T-cell (primary cell): ENCODE measurements at regions of chr5 and their contacts with region 1.

Region 1: DNA sequence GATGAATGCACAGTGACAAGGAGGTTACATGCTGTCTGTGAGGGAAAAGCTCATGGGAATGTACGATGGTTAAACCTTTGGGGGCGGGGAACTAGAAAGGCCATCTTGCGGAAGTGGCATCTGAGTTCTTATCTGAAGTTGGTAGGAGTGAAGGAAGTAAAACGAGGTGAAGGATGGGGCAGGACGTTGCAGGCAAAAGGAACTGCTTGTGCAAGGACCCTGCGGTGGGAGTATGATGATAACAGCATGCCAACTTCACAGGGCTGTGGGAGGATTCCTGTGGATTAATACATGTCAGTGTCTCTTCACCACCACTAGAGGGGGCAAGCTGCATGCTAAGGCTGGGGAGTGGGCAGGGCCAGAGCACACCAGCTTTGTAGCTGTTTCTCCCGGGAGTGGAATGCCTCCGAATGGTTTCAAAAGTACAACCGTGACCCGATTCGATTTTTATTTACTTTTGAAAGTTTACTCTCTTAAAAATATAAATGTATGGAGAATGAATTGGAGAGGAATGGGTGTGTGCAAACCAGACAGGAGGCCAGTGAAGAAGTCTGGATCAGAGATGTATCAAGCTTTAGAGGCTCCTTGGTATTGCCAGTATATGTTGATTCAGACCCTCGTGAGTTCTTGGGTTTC is 62.5 kb downstream of the CYFIP2 start:
- DNase-seq: peak in 34 of 35 experiments; percentile 24 to 81 (median 42)
- ATAC-seq: peak; percentile 79 to 91 (median 88)
- H3K4me3 ChIP-seq: no peak overlapping the region
- H3K4me3 Mint-ChIP-seq: peak overlapping the region; percentile 14 to 67 (median 31)
- H3K27ac ChIP-seq: peak overlapping the region; percentile 54
- H3K27ac Mint-ChIP-seq: peak overlapping the region; percentile 78 to 87
- H3K4me1 ChIP-seq: peaks cover 18 to 23% of the 10 kb centered on the region in 2 experiments
- H3K4me1 Mint-ChIP-seq: peaks cover 35 to 43% (median 41%) of the 10 kb centered on the region in 3 donors
- H3K27me3 ChIP-seq: no peaks in the 10 kb centered on the region
- H3K27me3 Mint-ChIP-seq: no peaks in the 10 kb centered on the region

Region 2: DNA sequence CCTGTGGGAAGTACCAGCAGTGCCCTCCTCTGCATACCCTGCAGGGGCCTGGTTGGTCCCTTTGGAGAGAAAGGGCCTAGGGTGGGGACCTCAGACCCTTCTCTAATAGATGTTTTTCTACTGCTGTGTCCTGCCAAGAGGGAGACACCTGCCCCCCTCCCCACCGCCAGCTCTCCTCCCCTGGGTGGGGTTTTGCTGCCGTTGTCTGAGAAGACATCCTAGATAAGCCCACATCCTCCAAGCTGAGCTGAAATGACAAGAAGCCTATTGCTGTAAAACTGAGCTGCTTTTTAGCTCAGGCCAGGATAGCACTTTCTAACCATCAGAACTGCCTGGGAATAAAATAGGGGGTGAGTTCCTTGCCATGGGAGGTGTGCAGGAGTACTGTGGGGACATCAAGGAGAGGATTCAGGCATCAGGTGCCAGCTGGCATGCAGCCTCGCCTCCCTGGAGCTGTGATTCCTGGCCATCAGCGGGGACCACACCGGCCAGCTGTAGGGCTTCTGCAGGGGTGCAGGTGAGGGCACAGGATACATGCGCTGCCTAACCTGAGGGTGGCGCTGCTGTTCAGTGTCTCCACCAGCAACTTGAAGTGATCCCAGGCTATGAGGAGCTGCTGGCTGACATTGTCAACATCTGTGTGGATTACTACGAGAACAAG is 24.6 kb before region 1 on chr5:
- CTCF ChIA-PET with region 1: interaction called, 6 to 12 read pairs
- POLR2A ChIA-PET with region 1: no interaction called
- DNase-seq: peak; percentile 32 to 78 (median 63)
- ATAC-seq: peak; percentile 77 to 85 (median 80)
- H3K4me3 ChIP-seq: peak overlapping the region; percentile 16 to 45
- H3K4me3 Mint-ChIP-seq: peak overlapping the region; percentile 64 to 78 (median 73)
- H3K27ac ChIP-seq: peak overlapping the region; percentile 66
- H3K27ac Mint-ChIP-seq: peak overlapping the region; percentile 96
- H3K4me1 ChIP-seq: peaks cover 39 to 56% of the 10 kb centered on the region in 2 experiments
- H3K4me1 Mint-ChIP-seq: peaks cover 67 to 71% (median 67%) of the 10 kb centered on the region in 3 donors
- H3K27me3 ChIP-seq: no peaks in the 10 kb centered on the region
- H3K27me3 Mint-ChIP-seq: no peaks in the 10 kb centered on the region

Region 3: DNA sequence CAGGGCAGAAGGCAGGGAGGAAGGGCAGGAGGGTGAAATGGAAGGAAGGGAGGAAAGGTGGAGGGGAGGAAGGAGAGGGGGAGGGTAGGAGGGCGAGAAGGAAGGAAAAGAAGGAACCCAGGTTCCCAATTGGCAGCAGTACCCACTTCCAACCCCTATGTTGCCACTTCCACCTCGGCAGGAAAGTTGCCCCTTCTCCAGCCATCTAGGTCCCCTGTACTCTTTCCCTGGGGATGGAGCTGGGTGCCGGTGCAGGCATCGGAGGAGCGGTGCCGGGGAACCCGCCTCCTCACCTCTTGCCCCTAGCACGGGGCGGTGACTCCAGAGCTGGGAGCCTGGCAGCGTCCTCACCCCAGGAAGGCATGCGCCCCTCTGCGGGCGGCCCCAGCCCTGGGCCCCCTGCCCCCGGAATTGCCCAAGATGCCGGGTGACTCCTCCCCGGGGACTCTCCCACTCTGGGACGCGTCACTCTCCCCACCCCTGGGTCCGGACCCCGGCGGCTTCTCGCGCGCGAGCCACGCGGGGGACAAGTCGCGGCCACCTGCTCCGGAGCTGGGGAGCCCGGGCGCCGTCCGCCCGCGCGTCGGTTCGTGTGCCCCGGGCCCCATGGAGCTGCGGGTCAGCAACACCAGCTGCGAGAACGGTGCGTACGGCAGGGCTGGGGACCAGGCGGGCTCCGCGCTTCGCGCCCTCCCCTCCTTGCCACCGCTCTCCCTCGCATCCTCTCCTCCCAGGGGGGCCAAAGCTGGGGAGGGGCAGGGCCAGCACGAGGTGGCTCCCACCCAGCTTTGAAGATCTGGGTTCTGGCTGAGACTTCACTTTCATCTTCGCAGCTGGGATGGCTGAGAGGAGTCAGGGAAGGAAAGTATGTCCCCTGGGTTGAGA is 131.6 kb after region 1 on chr5 and contains the start of gene NIPAL4:
- CTCF ChIA-PET with region 1: no interaction called
- POLR2A ChIA-PET with region 1: no interaction called
- DNase-seq: peak in 11 of 35 experiments; percentile 2 to 25 (median 9)
- ATAC-seq: peak; percentile 50 to 62 (median 57)
- H3K4me3 ChIP-seq: peak within 1 kb of the TSS; percentile 41 to 50
- H3K4me3 Mint-ChIP-seq: peak within 1 kb of the TSS; percentile 61 to 69 (median 67)
- H3K27ac ChIP-seq: no peak within 1 kb of the TSS
- H3K27ac Mint-ChIP-seq: no peak within 1 kb of the TSS
- H3K4me1 ChIP-seq: peaks cover 0 to 16% of the 10 kb centered on the region in 2 experiments
- H3K4me1 Mint-ChIP-seq: peaks cover 6 to 31% (median 20%) of the 10 kb centered on the region in 3 donors
- H3K27me3 ChIP-seq: peaks cover 4 to 32% of the 10 kb centered on the region in 2 experiments
- H3K27me3 Mint-ChIP-seq: peaks cover 19 to 30% of the 10 kb centered on the region in 2 donors
- total RNA-seq, gene NIPAL4: 0.06 to 0.49 (median 0.08) TPM in 4 of 5 donors, not detected in the other

Region 4: GRCh38 chr5:157487358-157487757 is 159.0 kb after region 1 on chr5:
- CTCF ChIA-PET with region 1: no interaction called
- POLR2A ChIA-PET with region 1: no interaction called
- DNase-seq: peak in 1 of 35 experiments; percentile 29
- ATAC-seq: peak in 3 of 4 experiments; percentile 37 to 52 (median 51)
- H3K4me3 ChIP-seq: no peak overlapping the region
- H3K4me3 Mint-ChIP-seq: peak overlapping the region in 1 of 3 donors; percentile 33
- H3K27ac ChIP-seq: peak overlapping the region; percentile 31
- H3K27ac Mint-ChIP-seq: peak overlapping the region; percentile 68 to 91
- H3K4me1 ChIP-seq: peaks cover 10 to 26% of the 10 kb centered on the region in 2 experiments
- H3K4me1 Mint-ChIP-seq: peaks cover 14 to 37% (median 22%) of the 10 kb centered on the region in 3 donors
- H3K27me3 ChIP-seq: no peaks in the 10 kb centered on the region
- H3K27me3 Mint-ChIP-seq: no peaks in the 10 kb centered on the region